ENCODE measurements at regions of chr3 and their contacts with region 1.

Region 1: GRCh38 chr3:150495563-150496168 is 50.6 kb downstream of the SERP1 start:
- DNase-seq: no peak
- ATAC-seq: peak; percentile 58 to 62
- H3K4me3 ChIP-seq: no peak overlapping the region
- H3K27ac ChIP-seq: no peak overlapping the region
- H3K4me1 ChIP-seq: no peaks in the 10 kb centered on the region
- H3K27me3 ChIP-seq: no peaks in the 10 kb centered on the region
- CTCF ChIP-seq: peak; percentile 73 to 96 (median 80)
- POLR2A ChIP-seq: no peak

Region 2: DNA sequence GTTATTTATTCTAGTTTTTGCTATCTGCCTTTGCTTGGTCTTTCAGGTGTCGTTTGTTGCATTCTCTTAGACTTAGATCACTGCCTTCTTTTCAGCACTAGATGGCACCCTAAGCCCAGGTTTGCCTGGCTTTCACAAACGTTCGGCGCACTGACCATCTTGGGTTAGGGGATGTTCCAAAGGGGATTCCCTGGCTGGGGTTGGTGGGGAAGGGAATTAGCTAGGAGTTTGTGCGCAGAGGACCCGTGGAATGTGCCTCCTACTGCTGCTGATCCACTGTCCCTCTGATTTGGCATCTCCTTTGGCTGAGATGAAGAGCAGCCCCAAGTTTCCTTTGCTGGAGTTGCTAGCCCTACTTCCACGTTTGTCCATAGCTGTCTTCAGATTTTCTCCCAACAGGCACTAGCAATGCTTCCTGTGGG is 558.8 kb before region 1 on chr3:
- in situ Hi-C with region 1: loop called in 3 of 4 experiments (anchors 25 kb)
- intact Hi-C with region 1: loop called (anchors 5 kb)
- DNase-seq: peak; percentile 33 to 47
- ATAC-seq: peak; percentile 82 to 87
- H3K4me3 ChIP-seq: no peak overlapping the region
- H3K27ac ChIP-seq: peak overlapping the region in 3 of 4 donors; percentile 11 to 28 (median 17)
- H3K4me1 ChIP-seq: peaks cover 15 to 17% of the 10 kb centered on the region in 2 donors
- H3K27me3 ChIP-seq: no peaks in the 10 kb centered on the region
- CTCF ChIP-seq: peak; percentile 63 to 85 (median 71)
- POLR2A ChIP-seq: no peak

Region 3: GRCh38 chr3:150227839-150228238 is 267.8 kb before region 1 on chr3:
- in situ Hi-C with region 1: loop called in 2 of 4 experiments (anchors 5 to 10 kb)
- intact Hi-C with region 1: loop called (anchors 2 kb)
- DNase-seq: no peak
- ATAC-seq: peak in 1 of 2 donors; percentile 69
- H3K4me3 ChIP-seq: no peak overlapping the region
- H3K27ac ChIP-seq: no peak overlapping the region
- H3K4me1 ChIP-seq: peaks cover 0 to 4% of the 10 kb centered on the region in 2 donors
- H3K27me3 ChIP-seq: no peaks in the 10 kb centered on the region
- CTCF ChIP-seq: peak; percentile 49 to 72 (median 61)
- POLR2A ChIP-seq: no peak

Region 4: DNA sequence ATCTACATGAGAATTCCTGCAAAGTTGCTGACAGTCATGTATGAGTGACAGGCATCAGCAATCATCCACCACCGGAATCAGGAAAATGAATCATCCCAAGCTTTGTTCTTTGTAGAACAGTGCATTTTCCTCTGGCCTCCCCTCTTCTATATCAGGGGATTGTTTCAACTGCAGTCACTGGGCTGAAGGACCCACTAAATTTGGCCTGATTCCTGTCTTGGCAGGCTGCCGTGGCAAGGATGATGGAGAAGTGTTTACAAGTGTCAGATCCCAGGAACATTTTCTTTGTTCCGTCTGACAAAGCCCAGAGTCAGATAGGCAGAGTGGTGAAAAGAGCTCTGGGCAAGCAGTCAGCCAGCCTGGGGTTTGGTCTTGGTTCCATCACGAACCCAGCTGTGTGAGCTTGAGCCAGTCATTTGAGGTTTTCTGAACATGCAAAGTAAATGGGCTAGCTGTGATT is 262.6 kb before region 1 on chr3:
- in situ Hi-C with region 1: loop called in 2 of 4 experiments (anchors 5 to 10 kb)
- intact Hi-C with region 1: no loop called
- DNase-seq: no peak
- ATAC-seq: no peak
- H3K4me3 ChIP-seq: no peak overlapping the region
- H3K27ac ChIP-seq: peak overlapping the region in 2 of 4 donors; percentile 25 to 69
- H3K4me1 ChIP-seq: peaks cover 0 to 28% of the 10 kb centered on the region in 2 donors
- H3K27me3 ChIP-seq: no peaks in the 10 kb centered on the region
- CTCF ChIP-seq: no peak
- POLR2A ChIP-seq: no peak

Region 5: GRCh38 chr3:150286390-150287147 is 209.1 kb before region 1 on chr3:
- in situ Hi-C with region 1: loop called (anchors 5 to 25 kb)
- intact Hi-C with region 1: loop called (anchors 1 kb)
- DNase-seq: no peak
- ATAC-seq: peak; percentile 80 to 87
- H3K4me3 ChIP-seq: no peak overlapping the region
- H3K27ac ChIP-seq: no peak overlapping the region
- H3K4me1 ChIP-seq: no peaks in the 10 kb centered on the region
- H3K27me3 ChIP-seq: no peaks in the 10 kb centered on the region
- CTCF ChIP-seq: peak; percentile 25 to 62 (median 48)
- POLR2A ChIP-seq: no peak

Region 6: GRCh38 chr3:150348500-150348899 is 147.2 kb before region 1 on chr3:
- in situ Hi-C with region 1: no loop called
- intact Hi-C with region 1: loop called (anchors 5 kb)
- DNase-seq: no peak
- ATAC-seq: peak; percentile 99 to 100
- H3K4me3 ChIP-seq: no peak overlapping the region
- H3K27ac ChIP-seq: peak overlapping the region in 3 of 4 donors; percentile 20 to 70 (median 44)
- H3K4me1 ChIP-seq: peaks cover 15 to 22% of the 10 kb centered on the region in 2 donors
- H3K27me3 ChIP-seq: peaks cover 0 to 4% (median 0%) of the 10 kb centered on the region in 3 donors
- CTCF ChIP-seq: no peak
- POLR2A ChIP-seq: no peak

Region 7: GRCh38 chr3:150515210-150515609 is 19.5 kb after region 1 on chr3:
- in situ Hi-C with region 1: no loop called
- intact Hi-C with region 1: no loop called
- DNase-seq: no peak
- ATAC-seq: no peak
- H3K4me3 ChIP-seq: no peak overlapping the region
- H3K27ac ChIP-seq: no peak overlapping the region
- H3K4me1 ChIP-seq: no peaks in the 10 kb centered on the region
- H3K27me3 ChIP-seq: no peaks in the 10 kb centered on the region
- CTCF ChIP-seq: no peak
- POLR2A ChIP-seq: no peak

Measured in gastrocnemius medialis (tissue), 4 donors.